ENCODE measurements at regions of chr2 and their contacts with region 1.

Region 1: GRCh38 chr2:8214036-8214615 is 467.7 kb upstream of the ID2 start:
- DNase-seq: no peak
- ATAC-seq: no peak
- H3K4me3 ChIP-seq: no peak overlapping the region
- H3K27ac ChIP-seq: no peak overlapping the region
- H3K4me1 ChIP-seq: peaks cover 5% of the 10 kb centered on the region
- H3K27me3 ChIP-seq: no peaks in the 10 kb centered on the region
- CTCF ChIP-seq: no peak

Region 2: GRCh38 chr2:8202132-8202531 is 12.0 kb before region 1 on chr2:
- CTCF ChIA-PET with region 1: no interaction called
- POLR2A ChIA-PET with region 1: interaction called, 12 read pairs
- intact Hi-C with region 1: no loop called
- DNase-seq: peak; percentile 68
- ATAC-seq: peak; percentile 29
- H3K4me3 ChIP-seq: no peak overlapping the region
- H3K27ac ChIP-seq: no peak overlapping the region
- H3K4me1 ChIP-seq: peaks cover 20% of the 10 kb centered on the region
- H3K27me3 ChIP-seq: no peaks in the 10 kb centered on the region
- CTCF ChIP-seq: no peak

Region 3: DNA sequence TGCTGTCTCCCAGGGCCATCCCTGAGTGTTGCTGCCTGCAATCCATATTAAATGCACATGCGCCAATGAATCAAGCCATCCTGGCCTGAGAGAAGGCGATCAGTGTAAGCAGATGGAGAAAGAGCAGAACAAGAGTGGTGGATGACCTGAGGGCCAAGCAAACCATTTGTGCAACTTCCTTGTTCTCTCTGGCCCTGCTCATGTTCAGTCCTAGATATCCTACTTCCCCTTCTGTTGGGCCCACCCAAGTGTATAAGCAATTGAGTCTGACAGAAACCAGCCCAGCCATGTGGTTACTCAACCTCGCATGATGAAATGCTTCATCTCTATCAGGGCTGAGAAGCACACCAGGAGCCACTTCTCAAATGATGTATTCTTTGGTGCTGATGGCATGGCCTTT is 84.7 kb after region 1 on chr2:
- CTCF ChIA-PET with region 1: no interaction called
- POLR2A ChIA-PET with region 1: no interaction called
- intact Hi-C with region 1: no loop called
- DNase-seq: no peak
- ATAC-seq: no peak
- H3K4me3 ChIP-seq: no peak overlapping the region
- H3K27ac ChIP-seq: no peak overlapping the region
- H3K4me1 ChIP-seq: peaks cover 11% of the 10 kb centered on the region; the same call in 1 of the 2 replicates
- H3K27me3 ChIP-seq: no peaks in the 10 kb centered on the region
- CTCF ChIP-seq: no peak

Region 4: GRCh38 chr2:8447610-8448221 is 233.6 kb after region 1 on chr2:
- CTCF ChIA-PET with region 1: no interaction called
- POLR2A ChIA-PET with region 1: no interaction called
- intact Hi-C with region 1: no loop called
- DNase-seq: peak; percentile 94
- ATAC-seq: peak; percentile 97
- H3K4me3 ChIP-seq: no peak overlapping the region
- H3K27ac ChIP-seq: peak overlapping the region; percentile 71
- H3K4me1 ChIP-seq: peaks cover 28% of the 10 kb centered on the region
- H3K27me3 ChIP-seq: no peaks in the 10 kb centered on the region
- CTCF ChIP-seq: no peak

Region 5: DNA sequence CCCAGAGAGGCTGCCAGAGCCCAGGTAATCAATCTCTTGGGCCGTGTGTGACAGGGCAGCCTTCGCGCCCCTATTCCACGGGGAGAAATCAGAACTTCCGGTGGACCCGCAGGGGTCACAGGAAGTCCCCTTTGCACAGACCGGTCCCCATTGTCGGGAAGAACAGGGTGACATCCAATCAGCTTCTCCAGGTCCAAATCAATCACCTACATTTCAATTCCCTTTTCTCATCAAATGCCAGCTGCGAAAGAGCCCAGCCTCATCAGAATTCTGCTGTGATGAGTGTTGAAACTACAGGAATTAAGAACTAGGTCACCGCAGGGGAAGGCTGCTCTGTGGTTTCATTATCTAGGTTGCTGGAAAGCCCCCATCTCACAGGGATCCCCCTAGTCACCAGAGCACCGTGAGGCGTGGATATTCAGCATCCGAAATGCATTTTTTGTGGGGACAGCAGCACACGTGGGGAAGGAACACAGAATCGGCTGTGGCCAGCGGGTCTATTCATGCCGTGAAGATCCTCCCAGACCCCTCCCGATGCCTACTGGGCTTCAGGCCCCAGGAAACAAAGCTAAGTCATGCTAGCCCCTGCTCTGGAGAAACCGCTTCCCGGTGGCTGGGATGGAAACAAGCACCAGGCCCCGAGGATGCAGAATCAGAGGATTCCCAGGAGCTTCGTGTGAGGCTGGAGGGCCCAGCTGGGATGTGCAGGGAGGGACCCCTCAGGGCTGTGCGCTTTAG is 274.0 kb after region 1 on chr2:
- CTCF ChIA-PET with region 1: no interaction called
- POLR2A ChIA-PET with region 1: no interaction called
- intact Hi-C with region 1: loop called (anchors 1 kb)
- DNase-seq: no peak
- ATAC-seq: no peak
- H3K4me3 ChIP-seq: no peak overlapping the region
- H3K27ac ChIP-seq: no peak overlapping the region
- H3K4me1 ChIP-seq: peaks cover 4% of the 10 kb centered on the region
- H3K27me3 ChIP-seq: no peaks in the 10 kb centered on the region
- CTCF ChIP-seq: no peak